ENCODE measurements at regions of chr16 and their contacts with region 1.

Region 1: GRCh38 chr16:15777533-15778203 is 79.2 kb downstream of the MYH11 start:
- DNase-seq: no peak
- ATAC-seq: peak in 1 of 2 donors; percentile 29

Region 2: DNA sequence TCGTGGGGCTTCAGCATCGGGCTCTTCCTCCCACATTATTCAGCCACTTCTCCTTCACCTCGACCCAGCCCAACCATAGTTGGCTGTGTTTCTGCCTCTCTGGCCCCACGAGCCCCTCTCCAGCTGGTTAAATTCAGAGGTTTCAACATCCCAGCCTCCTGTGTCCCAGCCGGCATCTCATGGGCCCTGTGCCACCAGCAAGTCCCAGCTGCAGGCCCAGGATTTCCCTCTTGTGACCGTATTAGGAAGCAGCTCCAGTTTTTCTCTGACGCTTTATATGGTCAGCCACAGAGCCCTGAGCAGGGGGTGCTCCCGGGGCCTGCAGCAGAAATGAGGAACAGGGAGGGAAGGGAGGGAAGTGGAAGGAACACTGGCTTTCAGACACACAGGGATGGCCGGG is 51.8 kb after region 1 on chr16:
- intact Hi-C with region 1: loop called in 1 of 2 experiments (anchors 10 kb)
- DNase-seq: peak; percentile 58
- ATAC-seq: peak; percentile 85 to 92

Region 3: GRCh38 chr16:16191493-16192167 is 414.0 kb after region 1 on chr16:
- intact Hi-C with region 1: loop called in 1 of 2 experiments (anchors 10 kb)
- DNase-seq: no peak
- ATAC-seq: no peak

Measured in left cardiac atrium (tissue), 4 donors.